ENCODE measurements at regions of chr3 and their contacts with region 1.

Region 1: GRCh38 chr3:153927107-153927506 is 194.1 kb upstream of the ARHGEF26 start:
- DNase-seq: peak; percentile 81
- H3K4me3 ChIP-seq: peak overlapping the region; percentile 45
- H3K27ac ChIP-seq: no peak overlapping the region
- H3K4me1 ChIP-seq: 0 out of 2 replicates have a peak, but pooled peaks cover 10% of the 10 kb centered on the region
- H3K27me3 ChIP-seq: no peaks in the 10 kb centered on the region

Region 2: DNA sequence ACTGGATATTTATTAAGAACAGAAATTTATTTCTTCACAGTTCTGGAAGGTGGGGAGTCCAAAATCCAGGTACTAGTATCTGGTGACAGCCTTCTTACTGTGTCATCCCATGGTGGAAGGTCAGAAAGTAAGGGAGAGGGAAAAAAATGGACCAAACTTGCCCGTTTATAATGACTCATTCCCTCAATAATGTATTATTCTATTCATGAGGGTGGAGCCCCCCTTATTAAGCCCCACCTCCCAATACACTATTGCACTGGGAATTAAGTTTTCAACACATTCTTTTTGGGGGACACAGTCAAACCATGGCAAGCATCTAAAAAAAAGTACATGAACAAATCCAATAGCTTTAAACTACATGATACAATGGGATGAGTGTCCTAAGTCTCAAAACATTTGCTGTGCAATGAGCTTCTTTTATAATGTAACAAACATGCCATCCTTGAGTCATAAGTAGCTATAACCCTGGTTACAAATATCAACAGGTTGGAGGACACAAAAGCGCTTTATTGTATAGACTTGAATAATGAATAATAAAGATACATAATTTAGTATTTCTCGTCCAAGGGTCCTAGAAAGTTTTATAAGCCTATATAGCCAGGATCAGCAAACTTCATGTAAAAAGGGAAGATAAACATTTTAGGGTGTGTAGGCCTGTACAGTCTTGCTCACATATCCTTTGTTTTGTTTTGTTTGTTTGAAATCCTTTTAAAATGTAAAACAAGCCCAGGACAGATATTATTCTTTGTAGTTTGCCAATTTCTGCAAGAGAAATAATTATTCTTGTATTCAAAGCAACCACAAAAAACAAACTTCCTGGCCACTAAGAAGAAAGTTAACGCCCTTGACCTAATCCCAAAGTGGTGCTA is 925.7 kb before region 1 on chr3:
- in situ Hi-C with region 1: loop called (anchors 25 kb)
- DNase-seq: peak; percentile 19
- H3K4me3 ChIP-seq: no peak overlapping the region
- H3K27ac ChIP-seq: no peak overlapping the region
- H3K4me1 ChIP-seq: no peaks in the 10 kb centered on the region
- H3K27me3 ChIP-seq: no peaks in the 10 kb centered on the region

Measured in GM23248 (cell line).